Endothelial cell of umbilical vein (primary cell): ENCODE measurements at regions of chr2 and their contacts with region 1.

Region 1: DNA sequence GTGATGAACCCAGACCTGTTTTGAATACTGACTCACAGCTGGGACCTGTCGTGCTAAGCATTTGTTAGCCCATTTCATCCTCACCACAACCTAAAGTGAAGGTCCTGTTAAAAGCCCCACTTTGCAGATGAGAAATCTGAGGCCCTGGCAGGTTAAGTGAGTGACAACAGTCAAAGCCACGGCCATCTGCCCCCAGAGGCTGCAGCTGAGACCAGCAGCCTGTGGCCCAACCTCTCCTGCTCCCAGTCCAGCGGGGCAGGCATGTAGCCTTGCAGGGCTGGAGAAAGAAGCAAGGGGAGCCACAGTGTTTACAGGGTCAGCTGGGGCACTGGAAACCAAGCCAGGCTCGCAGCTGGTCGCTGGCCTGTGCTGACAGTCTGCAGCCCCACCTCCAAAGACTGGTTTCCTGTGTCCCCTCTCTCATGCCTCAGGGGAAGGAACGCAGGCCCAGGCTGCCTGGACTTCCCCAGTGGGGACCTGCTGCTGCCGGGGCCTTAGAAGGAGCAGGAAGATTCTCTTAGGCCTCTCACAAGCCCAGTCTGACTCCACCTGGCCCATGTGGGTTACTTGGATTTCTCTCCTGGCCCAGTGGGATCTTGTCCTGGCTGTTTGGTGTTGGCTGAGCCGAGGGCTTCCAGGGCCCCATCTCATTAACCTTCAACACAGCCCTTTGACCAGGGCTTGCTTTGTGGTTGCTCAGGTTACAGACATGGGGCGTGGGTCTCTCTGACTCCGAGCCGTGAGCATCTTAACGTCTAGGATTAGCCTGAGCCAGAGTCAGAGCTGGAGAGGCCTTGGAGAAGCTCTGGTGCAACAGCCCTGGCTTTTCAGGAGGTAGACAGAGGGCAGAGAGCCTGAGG is 1.7 kb downstream of the INPP5D start:
- DNase-seq: peak; percentile 70
- H3K4me3 ChIP-seq: peak overlapping the region; percentile 21 to 65 (median 55)
- H3K27ac ChIP-seq: peak overlapping the region; percentile 29
- H3K4me1 ChIP-seq: peaks cover 32% of the 10 kb centered on the region
- H3K27me3 ChIP-seq: no peaks in the 10 kb centered on the region
- CTCF ChIP-seq: peak; percentile 33 to 56
- POLR2A ChIP-seq: peak; percentile 19

Region 2: DNA sequence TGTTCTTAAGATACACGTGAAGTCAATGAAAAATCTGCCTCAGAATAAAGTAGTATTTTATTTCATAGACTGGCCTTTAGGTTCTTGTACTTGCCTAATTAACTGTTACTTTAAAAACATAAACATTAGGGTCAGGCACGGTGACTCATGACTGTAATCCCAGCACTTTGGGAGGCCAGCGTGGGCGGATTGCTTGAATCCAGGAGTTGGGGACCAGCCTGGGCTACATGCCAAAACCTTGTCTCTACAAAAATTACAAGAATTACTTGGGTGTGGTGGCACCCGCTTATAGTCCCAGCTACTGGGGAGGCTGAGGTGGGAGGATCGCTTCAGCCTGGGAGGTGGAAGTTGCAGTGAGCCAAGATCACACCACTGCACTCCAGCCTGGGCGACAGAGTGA is 207.7 kb before region 1 on chr2:
- CTCF ChIA-PET with region 1: interaction called, 14 read pairs
- POLR2A ChIA-PET with region 1: no interaction called
- dilution Hi-C with region 1: no loop called
- intact Hi-C with region 1: no loop called
- DNase-seq: peak; percentile 68
- H3K4me3 ChIP-seq: no peak overlapping the region
- H3K27ac ChIP-seq: no peak overlapping the region
- H3K4me1 ChIP-seq: peaks cover 8% of the 10 kb centered on the region
- H3K27me3 ChIP-seq: no peaks in the 10 kb centered on the region
- CTCF ChIP-seq: no peak
- POLR2A ChIP-seq: no peak

Region 3: GRCh38 chr2:233075966-233076339 is 14.1 kb after region 1 on chr2:
- CTCF ChIA-PET with region 1: interaction called, 9 read pairs
- POLR2A ChIA-PET with region 1: interaction called, 6 read pairs
- dilution Hi-C with region 1: no loop called
- intact Hi-C with region 1: loop called (anchors 1 kb)
- DNase-seq: peak; percentile 17
- H3K4me3 ChIP-seq: no peak overlapping the region
- H3K27ac ChIP-seq: no peak overlapping the region
- H3K4me1 ChIP-seq: peaks cover 18% of the 10 kb centered on the region
- H3K27me3 ChIP-seq: no peaks in the 10 kb centered on the region
- CTCF ChIP-seq: no peak
- POLR2A ChIP-seq: no peak

Region 4: DNA sequence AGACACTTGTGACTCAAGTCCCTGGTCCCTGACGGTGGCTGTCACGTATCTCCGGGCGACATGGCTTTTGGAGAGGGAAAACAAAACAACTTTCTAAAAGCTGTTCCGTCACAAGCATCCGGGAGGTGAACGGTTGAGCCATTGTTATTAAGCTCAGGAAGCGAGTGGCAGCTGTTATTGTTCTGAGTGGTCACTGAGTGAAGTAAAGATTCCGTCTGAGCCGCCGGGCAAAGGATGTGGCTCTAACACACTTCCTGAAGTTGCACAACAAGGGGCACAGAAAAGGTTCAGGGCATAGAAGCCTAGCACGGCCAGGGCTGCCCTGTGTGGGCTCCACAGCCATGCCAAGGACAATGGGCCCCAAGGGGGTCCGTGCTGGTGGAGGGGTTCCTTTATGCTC is 22.7 kb after region 1 on chr2:
- CTCF ChIA-PET with region 1: interaction called, 30 read pairs
- POLR2A ChIA-PET with region 1: no interaction called
- dilution Hi-C with region 1: no loop called
- intact Hi-C with region 1: loop called (anchors 1 kb)
- DNase-seq: peak; percentile 96
- H3K4me3 ChIP-seq: peak overlapping the region in 1 of 3 experiments; percentile 3
- H3K27ac ChIP-seq: peak overlapping the region; percentile 94
- H3K4me1 ChIP-seq: peaks cover 40% of the 10 kb centered on the region
- H3K27me3 ChIP-seq: no peaks in the 10 kb centered on the region
- CTCF ChIP-seq: no peak
- POLR2A ChIP-seq: peak; percentile 42

Region 5: GRCh38 chr2:233096006-233096405 is 34.2 kb after region 1 on chr2:
- CTCF ChIA-PET with region 1: no interaction called
- POLR2A ChIA-PET with region 1: no interaction called
- dilution Hi-C with region 1: no loop called
- intact Hi-C with region 1: no loop called
- DNase-seq: no peak
- H3K4me3 ChIP-seq: no peak overlapping the region
- H3K27ac ChIP-seq: no peak overlapping the region
- H3K4me1 ChIP-seq: peaks cover 4% of the 10 kb centered on the region
- H3K27me3 ChIP-seq: no peaks in the 10 kb centered on the region
- CTCF ChIP-seq: no peak
- POLR2A ChIP-seq: no peak